Thyroid gland (tissue), 4 donors: ENCODE measurements at regions of chr2 and their contacts with region 1.

Region 1: DNA sequence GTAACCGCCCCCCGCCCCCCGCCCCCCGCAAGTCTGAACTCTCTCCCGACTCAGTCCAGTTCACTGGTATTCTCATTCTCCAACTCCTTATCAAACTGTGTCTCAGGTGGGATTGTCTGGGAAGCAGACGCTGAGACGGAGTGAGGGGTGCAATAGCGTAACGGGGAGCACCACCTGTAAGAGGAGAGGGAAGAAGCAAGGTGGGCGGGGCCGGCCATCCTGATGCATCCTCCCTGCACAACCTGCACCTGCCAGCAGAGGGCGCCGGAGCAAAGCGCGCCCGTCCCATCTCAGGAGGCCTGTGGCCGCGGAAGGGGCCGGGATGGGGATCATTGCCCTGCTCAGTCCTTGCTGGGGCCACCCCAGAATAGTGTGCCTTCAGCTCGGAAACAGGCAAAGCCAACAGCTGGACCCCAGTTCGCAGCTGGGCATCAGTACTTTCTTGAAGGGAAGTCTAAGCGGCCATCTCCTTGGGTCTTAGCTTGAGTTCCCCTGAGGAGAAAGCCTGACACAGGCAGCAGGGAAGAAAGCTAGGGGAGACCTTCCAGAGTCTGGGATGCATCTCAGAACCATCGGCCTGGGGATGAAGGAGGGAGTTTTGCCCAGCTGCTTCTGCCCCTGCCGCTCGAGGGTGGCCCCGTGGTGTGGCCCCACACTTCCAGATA is 208.0 kb downstream of the TFCP2L1 start:
- DNase-seq: peak; percentile 64 to 68
- H3K4me3 ChIP-seq: no peak overlapping the region
- H3K27ac ChIP-seq: no peak overlapping the region
- H3K4me1 ChIP-seq: peaks cover 0 to 6% of the 10 kb centered on the region in 2 donors
- H3K27me3 ChIP-seq: no peaks in the 10 kb centered on the region
- CTCF ChIP-seq: peak; percentile 53 to 88 (median 70)
- POLR2A ChIP-seq: no peak

Region 2: DNA sequence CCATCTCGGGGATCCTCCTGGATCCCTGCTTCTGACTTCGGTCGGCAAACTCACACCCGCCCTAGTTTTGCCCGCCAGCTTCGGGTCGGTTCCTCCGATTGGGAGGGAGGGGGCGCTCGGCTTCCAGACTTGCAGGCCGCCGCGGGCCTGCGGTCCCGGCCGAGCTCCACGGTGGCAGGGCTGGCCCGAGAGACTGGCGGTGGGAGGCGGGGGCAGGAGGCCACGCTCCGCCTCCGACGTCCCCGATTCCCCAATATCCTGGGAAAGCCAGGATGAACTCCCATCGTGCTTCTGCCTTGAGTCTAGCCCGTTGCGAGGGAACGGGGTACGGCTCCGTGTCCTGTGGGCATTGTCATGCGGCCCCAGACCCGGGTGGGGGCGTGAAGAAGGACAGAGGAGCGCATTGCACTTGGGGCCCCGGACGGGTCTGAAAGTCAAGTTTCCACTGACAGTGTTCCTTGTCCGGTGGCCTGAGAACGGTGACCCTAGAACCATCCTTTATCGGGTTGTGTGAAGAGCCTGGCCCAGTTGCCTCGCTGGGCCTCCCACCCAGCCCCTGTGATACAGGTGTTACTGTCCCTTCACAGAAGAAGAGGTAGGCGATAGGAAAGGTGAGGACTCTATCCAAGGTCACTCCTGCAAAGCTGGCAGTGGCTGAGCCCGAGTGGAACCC is 733.4 kb before region 1 on chr2:
- intact Hi-C with region 1: loop called (anchors 10 kb)
- DNase-seq: peak; percentile 89 to 93
- H3K4me3 ChIP-seq: peak overlapping the region in 1 of 3 donors; percentile 40
- H3K27ac ChIP-seq: peak overlapping the region in 2 of 3 donors; percentile 32 to 84
- H3K4me1 ChIP-seq: peaks cover 28 to 30% of the 10 kb centered on the region in 2 donors
- H3K27me3 ChIP-seq: no peaks in the 10 kb centered on the region
- CTCF ChIP-seq: peak; percentile 72 to 98 (median 88)
- POLR2A ChIP-seq: peak in 1 of 2 donors; percentile 45

Region 3: GRCh38 chr2:120694034-120694433 is 383.0 kb before region 1 on chr2:
- intact Hi-C with region 1: loop called (anchors 2 kb)
- DNase-seq: no peak
- H3K4me3 ChIP-seq: no peak overlapping the region
- H3K27ac ChIP-seq: no peak overlapping the region
- H3K4me1 ChIP-seq: no peaks in the 10 kb centered on the region
- H3K27me3 ChIP-seq: peaks cover 9% of the 10 kb centered on the region
- CTCF ChIP-seq: no peak
- POLR2A ChIP-seq: no peak

Region 4: DNA sequence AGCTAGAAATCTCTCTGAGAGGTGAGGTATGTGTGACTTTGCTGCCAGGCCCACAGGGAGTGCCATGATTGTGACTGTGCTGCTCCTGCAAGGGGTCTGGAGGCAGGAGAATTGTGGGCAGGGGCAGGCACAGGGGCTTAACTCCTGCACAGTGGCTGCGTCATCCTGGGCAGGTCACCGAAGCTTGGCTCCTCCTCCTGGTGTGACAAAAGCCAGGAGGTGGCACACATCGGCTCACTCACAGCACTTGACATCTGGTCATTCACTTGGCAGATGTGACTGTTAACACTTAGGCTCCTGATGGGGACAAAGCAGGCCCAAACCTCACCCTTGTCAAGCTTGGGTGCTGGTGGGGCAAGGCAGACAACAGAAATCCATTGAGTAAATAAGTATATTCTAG is 377.7 kb before region 1 on chr2:
- intact Hi-C with region 1: loop called (anchors 2 kb)
- DNase-seq: no peak
- H3K4me3 ChIP-seq: no peak overlapping the region
- H3K27ac ChIP-seq: no peak overlapping the region
- H3K4me1 ChIP-seq: no peaks in the 10 kb centered on the region
- H3K27me3 ChIP-seq: peaks cover 7% of the 10 kb centered on the region
- CTCF ChIP-seq: no peak
- POLR2A ChIP-seq: no peak

Region 5: DNA sequence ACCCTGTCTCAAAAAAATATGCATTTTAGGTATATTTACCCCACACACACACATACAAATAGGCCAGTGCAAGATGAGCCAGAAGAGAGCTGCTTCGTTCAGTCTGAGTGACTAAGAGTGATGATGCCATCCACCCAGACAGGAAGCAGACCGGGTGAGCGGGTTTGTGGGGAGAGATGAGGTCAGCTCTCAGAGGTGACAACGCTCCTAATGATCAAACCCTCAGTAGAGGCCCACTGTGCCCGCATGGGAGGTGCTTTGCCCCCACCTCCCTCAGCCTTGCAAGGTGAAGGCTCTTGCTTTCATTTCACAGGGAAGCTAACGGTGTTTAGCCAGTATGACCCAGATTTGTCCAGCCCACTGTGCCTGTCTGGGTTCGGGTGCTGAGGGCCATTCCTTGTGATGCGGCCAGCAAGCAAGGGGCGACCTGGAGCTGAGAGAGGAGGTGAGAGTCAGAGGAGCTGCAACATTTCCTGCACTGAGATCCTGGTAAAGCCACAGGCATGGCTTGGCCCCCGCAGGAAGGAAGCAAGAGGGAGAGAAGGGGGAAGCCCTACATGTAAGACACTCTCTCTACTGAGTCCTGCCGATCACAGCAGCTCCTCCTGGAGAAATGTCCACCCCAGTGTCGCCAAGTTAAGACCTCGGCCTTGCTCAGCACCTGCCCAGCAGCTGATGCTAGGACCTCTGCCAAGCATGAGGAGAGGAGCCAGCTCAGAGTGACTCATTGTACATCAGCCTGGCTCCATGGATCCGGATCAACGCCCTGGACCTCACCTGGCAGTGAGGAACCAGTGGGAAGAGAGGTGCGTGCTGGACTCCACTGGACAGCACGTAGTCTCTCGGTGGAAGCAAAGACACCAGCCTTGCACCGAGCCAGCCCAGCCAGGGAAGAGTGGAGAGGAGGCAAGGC is 622.7 kb after region 1 on chr2:
- intact Hi-C with region 1: loop called (anchors 10 kb)
- DNase-seq: peak; percentile 83 to 93
- H3K4me3 ChIP-seq: no peak overlapping the region
- H3K27ac ChIP-seq: no peak overlapping the region
- H3K4me1 ChIP-seq: peaks cover 5 to 11% of the 10 kb centered on the region in 2 donors
- H3K27me3 ChIP-seq: no peaks in the 10 kb centered on the region
- CTCF ChIP-seq: no peak
- POLR2A ChIP-seq: no peak